WTC11 (cell line): ENCODE measurements at regions of chr17 and their contacts with region 1.

Region 1: DNA sequence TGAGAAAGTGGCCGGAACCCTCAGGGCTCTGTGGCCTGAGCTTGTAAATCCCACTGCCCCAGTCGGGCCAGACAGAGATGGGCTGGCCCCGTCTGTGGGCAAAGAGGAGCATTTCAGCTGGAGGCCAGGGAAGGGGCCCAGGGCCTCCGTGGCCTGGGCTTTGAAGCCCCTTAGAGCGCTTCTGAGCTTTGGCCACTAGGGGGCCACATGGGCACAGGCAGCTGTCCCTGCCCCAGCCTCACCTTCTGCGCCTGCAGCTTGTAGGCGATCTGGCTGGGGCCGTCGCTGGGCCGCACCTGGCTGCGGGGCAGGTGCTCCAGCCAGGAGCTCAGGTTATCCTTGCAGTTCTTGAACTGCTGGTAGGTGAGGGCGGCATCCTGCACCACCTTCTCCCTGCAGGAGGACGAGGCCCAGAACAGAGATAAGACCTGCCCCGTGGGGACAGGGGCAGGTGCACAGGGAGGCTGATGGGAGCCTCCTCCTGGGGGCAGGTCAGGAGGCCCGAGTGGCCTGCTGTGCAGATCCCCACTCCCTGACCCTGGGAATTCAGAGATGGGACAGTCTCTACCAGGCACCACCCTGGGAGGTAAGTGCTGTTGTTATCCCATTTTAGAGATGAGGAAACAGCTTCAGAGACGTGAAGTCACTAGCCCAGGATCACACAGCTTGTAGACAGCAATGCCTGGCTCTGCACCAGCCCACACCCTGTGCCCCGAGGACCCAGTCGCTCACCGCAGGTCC is 12.8 kb downstream of the EVPL start:
- DNase-seq: peak; percentile 92
- ATAC-seq: peak; percentile 94
- H3K4me3 Mint-ChIP-seq: no peak overlapping the region
- H3K27ac Mint-ChIP-seq: no peak overlapping the region
- H3K4me1 Mint-ChIP-seq: 0 out of 2 replicates have a peak, but pooled peaks cover 2% of the 10 kb centered on the region
- H3K27me3 Mint-ChIP-seq: no peaks in the 10 kb centered on the region
- CTCF ChIP-seq: peak; percentile 98

Region 2: GRCh38 chr17:75914643-75915267 is 99.6 kb before region 1 on chr17:
- CTCF ChIA-PET with region 1: interaction called, 10 read pairs
- POLR2A ChIA-PET with region 1: no interaction called
- DNase-seq: peak; percentile 66
- ATAC-seq: peak; percentile 83
- H3K4me3 Mint-ChIP-seq: no peak overlapping the region
- H3K27ac Mint-ChIP-seq: peak overlapping the region; percentile 9; the same call in 1 of the 2 replicates
- H3K4me1 Mint-ChIP-seq: 0 out of 2 replicates have a peak, but pooled peaks cover 2% of the 10 kb centered on the region
- H3K27me3 Mint-ChIP-seq: no peaks in the 10 kb centered on the region
- CTCF ChIP-seq: no peak

Region 3: DNA sequence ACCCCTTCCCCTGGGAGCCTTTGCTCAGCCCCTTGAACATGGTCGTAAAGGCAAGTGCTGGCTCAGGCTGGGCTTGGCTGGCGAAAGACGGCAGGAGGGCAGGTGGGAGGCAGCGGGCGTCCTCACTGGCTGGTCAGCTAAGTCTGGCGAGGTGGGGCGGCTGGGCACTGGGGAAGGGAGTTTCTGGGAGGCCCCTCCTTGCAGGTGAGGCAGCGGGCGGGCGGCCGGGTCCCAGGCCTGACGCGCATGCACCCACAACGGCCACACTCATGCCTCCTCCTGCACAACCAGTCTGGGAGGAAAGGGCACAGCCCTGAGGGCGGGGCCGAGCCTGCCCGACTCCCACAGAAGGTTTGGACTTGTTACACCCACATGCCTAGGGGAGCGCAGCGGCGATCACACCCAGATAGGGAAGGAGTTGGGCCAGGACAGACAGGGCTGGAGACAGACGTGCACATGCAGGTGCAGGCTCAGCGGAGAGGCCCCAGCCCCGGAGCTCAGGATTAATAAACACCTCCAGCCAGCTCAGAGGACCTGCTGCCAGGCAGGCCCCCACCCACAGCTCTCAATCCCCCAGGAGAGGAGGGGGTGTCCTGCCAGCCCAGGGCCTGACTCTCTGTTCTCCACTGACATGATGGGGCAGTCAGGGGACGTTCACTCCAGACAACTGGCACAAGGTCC is 12.9 kb after region 1 on chr17 and contains the start of gene EVPL:
- CTCF ChIA-PET with region 1: interaction called, 42 read pairs
- POLR2A ChIA-PET with region 1: no interaction called
- DNase-seq: no peak
- ATAC-seq: no peak
- H3K4me3 Mint-ChIP-seq: no peak within 1 kb of the TSS
- H3K27ac Mint-ChIP-seq: peak within 1 kb of the TSS; percentile 57; the same call in 1 of the 2 replicates
- H3K4me1 Mint-ChIP-seq: peaks cover 20% of the 10 kb centered on the region
- H3K27me3 Mint-ChIP-seq: no peaks in the 10 kb centered on the region
- CTCF ChIP-seq: no peak
- total RNA-seq, gene EVPL: 0.46 to 1.3 TPM (median 0.62 TPM) in 3 replicates

Region 4: DNA sequence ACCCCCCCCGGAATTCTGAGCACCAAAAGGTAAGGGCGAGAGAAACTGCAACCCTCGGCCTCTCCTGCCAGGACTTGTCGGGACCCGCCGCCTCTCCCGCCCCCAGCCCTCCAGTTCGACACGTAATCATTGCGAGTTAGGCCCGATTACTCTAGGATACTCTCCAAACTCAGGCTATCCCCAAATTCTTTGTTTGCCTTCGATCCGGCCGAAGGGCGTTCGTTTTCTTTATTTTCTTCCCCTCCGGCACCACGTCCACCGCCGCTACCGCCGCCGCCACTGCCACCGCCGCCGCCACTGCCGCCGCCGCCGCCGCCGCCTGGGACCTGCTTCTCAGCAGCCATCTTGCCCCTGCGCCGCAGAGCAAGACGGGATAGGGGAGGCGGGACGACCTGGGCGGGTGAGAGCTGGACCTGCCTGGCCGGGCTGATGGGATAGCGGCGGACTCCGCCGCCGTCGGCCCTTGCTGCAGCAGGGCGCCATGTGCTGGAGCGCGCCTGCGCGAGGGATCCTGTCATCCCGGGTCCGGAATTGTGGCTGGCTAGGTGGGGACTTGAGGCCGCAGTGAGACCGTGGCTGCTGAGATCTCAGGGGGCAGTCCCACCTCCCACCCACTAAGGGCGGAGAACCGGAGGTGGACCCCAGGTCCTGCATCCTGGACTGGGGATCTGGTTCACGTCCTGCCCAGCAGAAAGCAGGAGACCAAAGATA is 57.9 kb after region 1 on chr17 and contains the start of gene SRP68:
- CTCF ChIA-PET with region 1: interaction called, 43 read pairs
- POLR2A ChIA-PET with region 1: no interaction called
- DNase-seq: peak; percentile 95
- ATAC-seq: peak; percentile 86
- H3K4me3 Mint-ChIP-seq: peak within 1 kb of the TSS; percentile 97
- H3K27ac Mint-ChIP-seq: peak within 1 kb of the TSS; percentile 89
- H3K4me1 Mint-ChIP-seq: peaks cover 30% of the 10 kb centered on the region
- H3K27me3 Mint-ChIP-seq: peaks cover 40% of the 10 kb centered on the region
- CTCF ChIP-seq: no peak
- total RNA-seq, gene SRP68: 80.5 to 90.7 TPM (median 82.0 TPM) in 3 replicates

Region 5: DNA sequence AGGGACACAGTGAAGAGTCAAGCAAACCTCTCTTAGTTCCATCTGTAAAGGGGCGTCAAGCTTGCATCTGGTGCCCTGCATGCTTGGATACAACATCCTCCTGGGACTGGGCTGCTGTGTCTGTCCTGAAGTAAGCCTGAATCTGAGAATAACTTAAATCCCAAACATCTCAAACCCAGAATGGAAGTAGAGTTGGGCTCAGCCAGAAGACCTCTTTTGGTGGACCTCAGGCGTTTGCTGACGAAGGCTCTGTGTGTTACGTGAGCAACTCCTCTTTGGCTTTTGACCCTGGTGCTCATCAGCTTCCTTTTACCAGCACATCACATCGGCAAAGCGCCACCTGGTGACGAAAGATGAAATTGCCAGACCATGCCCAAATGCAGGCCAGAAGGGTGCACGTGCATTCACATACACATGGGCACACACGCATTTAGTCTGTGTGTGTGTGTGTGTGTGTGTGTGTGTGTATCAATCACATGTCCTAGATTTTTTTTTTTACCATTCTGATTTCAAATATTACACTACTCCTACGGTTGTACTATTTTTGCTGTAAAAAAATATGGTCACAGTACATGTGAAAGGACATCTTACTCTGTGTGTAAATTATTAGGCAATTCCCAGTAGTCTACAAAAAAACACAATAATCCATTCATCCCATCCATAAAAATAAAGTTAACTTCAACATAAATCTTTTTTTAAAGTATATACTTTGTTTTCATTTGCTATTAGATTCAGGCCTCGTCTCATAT is 167.8 kb after region 1 on chr17:
- CTCF ChIA-PET with region 1: interaction called, 19 read pairs
- POLR2A ChIA-PET with region 1: no interaction called
- DNase-seq: peak; percentile 94
- ATAC-seq: peak; percentile 90
- H3K4me3 Mint-ChIP-seq: no peak overlapping the region
- H3K27ac Mint-ChIP-seq: no peak overlapping the region
- H3K4me1 Mint-ChIP-seq: peaks cover 9% of the 10 kb centered on the region
- H3K27me3 Mint-ChIP-seq: peaks cover 4% of the 10 kb centered on the region; the same call in 1 of the 2 replicates
- CTCF ChIP-seq: peak; percentile 83

Region 6: GRCh38 chr17:76296186-76296585 is 281.8 kb after region 1 on chr17:
- CTCF ChIA-PET with region 1: interaction called, 16 read pairs
- POLR2A ChIA-PET with region 1: no interaction called
- DNase-seq: no peak
- ATAC-seq: no peak
- H3K4me3 Mint-ChIP-seq: no peak overlapping the region
- H3K27ac Mint-ChIP-seq: no peak overlapping the region
- H3K4me1 Mint-ChIP-seq: 0 out of 2 replicates have a peak, but pooled peaks cover 4% of the 10 kb centered on the region
- H3K27me3 Mint-ChIP-seq: no peaks in the 10 kb centered on the region
- CTCF ChIP-seq: no peak